Mammary epithelial cell (primary cell): ENCODE measurements at regions of chr1 and their contacts with region 1.

Region 1: DNA sequence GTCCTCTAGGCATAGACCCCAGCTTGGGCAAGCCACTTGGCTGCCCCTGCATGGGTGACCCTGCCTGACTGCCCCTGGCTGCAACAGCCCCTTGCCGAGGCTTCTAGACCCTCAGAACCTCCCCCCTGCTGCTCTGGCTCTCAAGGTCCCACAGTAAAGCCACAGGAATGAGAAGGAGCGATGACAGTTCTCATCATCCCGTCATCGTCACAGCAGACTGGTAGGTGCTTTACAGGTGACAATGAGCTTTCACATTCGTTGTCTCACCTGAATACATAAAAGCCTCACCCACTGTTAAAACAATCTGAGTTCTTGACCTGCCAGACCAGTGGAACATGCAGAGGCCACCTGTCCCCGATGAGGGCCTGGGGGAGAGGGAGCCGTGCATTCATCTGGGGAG is 36.0 kb upstream of the GPR157 start:
- DNase-seq: no peak
- H3K4me3 ChIP-seq: no peak overlapping the region
- H3K27ac ChIP-seq: no peak overlapping the region
- H3K4me1 ChIP-seq: peaks cover 24% of the 10 kb centered on the region
- H3K27me3 ChIP-seq: no peaks in the 10 kb centered on the region
- CTCF ChIP-seq: no peak

Region 2: DNA sequence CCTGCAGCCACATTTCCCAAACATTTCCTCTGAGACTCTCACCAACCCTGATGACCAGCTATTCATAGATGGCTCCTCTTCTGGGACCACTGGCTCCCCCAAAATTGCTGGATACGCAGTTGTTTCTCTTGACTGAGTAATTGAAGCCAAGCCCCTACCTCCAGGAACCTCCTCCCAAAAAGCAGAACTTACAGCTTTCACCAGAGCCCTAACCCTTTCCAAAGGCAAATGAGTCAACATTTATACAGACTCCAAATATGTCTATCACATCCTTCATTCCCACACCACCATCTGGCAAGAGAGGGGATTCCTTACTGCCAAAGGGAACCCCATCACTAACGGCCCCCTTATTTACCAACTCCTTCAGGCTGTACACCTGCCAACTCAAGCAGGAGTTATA is 239.5 kb before region 1 on chr1:
- CTCF ChIA-PET with region 1: interaction called, 10 read pairs
- dilution Hi-C with region 1: no loop called
- in situ Hi-C with region 1: no loop called
- intact Hi-C with region 1: no loop called
- DNase-seq: no peak
- H3K4me3 ChIP-seq: no peak overlapping the region
- H3K27ac ChIP-seq: no peak overlapping the region
- H3K4me1 ChIP-seq: no peaks in the 10 kb centered on the region
- H3K27me3 ChIP-seq: no peaks in the 10 kb centered on the region
- CTCF ChIP-seq: no peak

Region 3: DNA sequence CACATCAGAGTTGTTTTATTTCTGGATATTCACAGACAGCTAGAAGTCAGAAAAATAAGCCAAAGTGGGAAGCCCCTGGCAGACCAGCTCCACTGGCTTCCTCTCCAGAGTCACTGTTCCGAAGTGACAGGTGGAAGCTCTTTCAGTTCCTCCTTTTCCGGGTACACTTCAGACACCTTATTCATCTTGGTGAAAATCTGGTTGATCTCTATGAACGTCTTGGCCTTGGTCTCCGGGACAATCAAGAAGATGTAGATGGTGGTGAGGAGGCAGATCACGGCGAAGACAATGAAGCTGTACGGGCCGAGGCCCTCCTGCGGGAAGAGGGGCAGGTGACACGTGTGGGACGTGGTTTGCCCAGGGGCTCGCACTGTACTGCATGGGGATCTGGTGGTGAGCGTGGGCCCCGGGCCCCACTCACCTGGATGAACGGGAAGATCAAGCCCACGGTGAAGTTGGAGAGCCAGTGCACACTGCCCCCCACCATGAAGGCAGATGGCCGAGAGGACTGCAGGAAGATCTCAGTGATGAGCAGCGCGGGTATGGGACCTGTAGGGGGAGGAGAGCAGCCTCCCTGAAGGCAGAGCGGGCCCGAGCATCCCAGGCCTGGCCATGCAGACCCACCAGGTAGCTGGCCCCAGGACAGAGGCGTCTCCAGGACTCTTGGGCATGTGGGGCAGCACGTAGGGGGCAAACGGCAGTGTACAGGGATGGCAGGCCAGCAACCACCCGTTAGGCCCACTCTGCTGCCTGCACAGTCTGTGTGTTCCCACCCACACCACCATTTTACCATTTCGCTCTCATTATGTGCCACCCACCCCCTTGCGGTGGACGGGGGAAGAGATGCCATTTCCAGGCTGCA is 127.2 kb before region 1 on chr1:
- CTCF ChIA-PET with region 1: no interaction called
- dilution Hi-C with region 1: no loop called
- in situ Hi-C with region 1: no loop called
- intact Hi-C with region 1: no loop called
- DNase-seq: no peak
- H3K4me3 ChIP-seq: no peak overlapping the region
- H3K27ac ChIP-seq: no peak overlapping the region
- H3K4me1 ChIP-seq: peaks cover 19% of the 10 kb centered on the region
- H3K27me3 ChIP-seq: peaks cover 5% of the 10 kb centered on the region
- CTCF ChIP-seq: no peak